OCI-LY7 (cell line): ENCODE measurements at regions of chr21 and their contacts with region 1.

Region 1: DNA sequence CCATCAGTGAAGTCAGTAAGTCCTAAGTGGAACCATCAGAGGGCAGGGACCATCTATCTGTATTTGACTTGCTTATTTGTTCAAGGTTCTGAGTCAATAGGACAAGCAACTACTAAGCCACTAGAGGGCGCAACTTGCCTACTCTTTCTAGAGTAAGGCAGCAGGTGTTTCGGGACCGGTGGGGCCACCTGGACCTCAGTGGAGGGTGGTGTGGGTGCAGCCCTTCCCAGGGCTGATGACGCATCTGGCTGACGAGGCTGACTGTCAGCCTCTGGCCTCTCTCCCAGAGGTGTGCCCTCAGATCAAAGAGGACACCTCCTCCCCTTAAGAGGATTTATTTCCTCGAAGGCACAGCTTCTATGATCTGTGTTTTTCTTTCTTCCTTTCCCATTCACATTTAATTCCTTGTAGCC is 6.6 kb downstream of the CBR3 start:
- DNase-seq: peak; percentile 96
- H3K4me3 ChIP-seq: no peak overlapping the region
- H3K27ac ChIP-seq: no peak overlapping the region
- H3K4me1 ChIP-seq: peaks cover 10% of the 10 kb centered on the region
- CTCF ChIP-seq: peak; percentile 96

Region 2: DNA sequence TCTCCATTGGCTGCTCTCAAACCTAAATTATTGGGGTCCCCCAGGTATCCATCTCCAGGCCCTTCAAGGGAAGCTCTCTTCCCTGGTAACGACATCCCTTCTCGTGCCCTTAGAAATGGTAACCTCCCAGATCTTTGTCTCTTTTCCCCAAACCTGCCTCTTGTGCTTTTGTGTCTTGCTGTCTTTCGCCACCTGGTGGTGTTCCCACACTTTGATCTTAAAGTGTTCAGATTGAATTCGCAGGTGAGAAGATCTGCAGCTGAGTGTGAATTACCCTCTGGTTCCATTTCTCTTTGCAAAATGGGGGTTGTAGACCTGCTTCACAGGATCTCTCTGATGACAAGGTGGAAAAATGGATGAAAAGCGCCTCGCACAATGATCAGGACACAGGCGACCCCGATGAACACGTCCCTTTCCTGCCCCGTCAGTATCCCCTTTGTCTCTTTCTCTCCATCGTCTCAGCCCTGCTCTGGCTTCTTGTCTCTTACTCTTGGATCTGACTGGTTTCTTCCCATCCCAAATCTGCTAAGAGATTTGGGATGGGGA is 68.2 kb after region 1 on chr21:
- CTCF ChIA-PET with region 1: interaction called, 3 read pairs
- POLR2A ChIA-PET with region 1: interaction called, 3 read pairs
- intact Hi-C with region 1: loop called (anchors 1 kb)
- DNase-seq: peak; percentile 74
- H3K4me3 ChIP-seq: no peak overlapping the region
- H3K27ac ChIP-seq: no peak overlapping the region
- H3K4me1 ChIP-seq: no peaks in the 10 kb centered on the region
- CTCF ChIP-seq: peak; percentile 79

Region 3: GRCh38 chr21:36330904-36331303 is 189.4 kb after region 1 on chr21:
- CTCF ChIA-PET with region 1: no interaction called
- POLR2A ChIA-PET with region 1: no interaction called
- intact Hi-C with region 1: loop called (anchors 1 kb)
- DNase-seq: peak; percentile 76
- H3K4me3 ChIP-seq: no peak overlapping the region
- H3K27ac ChIP-seq: peak overlapping the region; percentile 4
- H3K4me1 ChIP-seq: peaks cover 25% of the 10 kb centered on the region
- CTCF ChIP-seq: peak; percentile 94

Region 4: GRCh38 chr21:36385233-36386030 is 243.9 kb after region 1 on chr21 and contains the start of gene CHAF1B:
- CTCF ChIA-PET with region 1: no interaction called
- POLR2A ChIA-PET with region 1: no interaction called
- intact Hi-C with region 1: loop called (anchors 5 kb)
- DNase-seq: peak; percentile 87
- H3K4me3 ChIP-seq: peak within 1 kb of the TSS; percentile 84
- H3K27ac ChIP-seq: peak within 1 kb of the TSS; percentile 23
- H3K4me1 ChIP-seq: peaks cover 8% of the 10 kb centered on the region
- CTCF ChIP-seq: no peak
- total RNA-seq, gene CHAF1B: 8.7 and 9.9 TPM in 2 replicates